T-cell (primary cell): ENCODE measurements at regions of chr11 and their contacts with region 1.

Region 1: DNA sequence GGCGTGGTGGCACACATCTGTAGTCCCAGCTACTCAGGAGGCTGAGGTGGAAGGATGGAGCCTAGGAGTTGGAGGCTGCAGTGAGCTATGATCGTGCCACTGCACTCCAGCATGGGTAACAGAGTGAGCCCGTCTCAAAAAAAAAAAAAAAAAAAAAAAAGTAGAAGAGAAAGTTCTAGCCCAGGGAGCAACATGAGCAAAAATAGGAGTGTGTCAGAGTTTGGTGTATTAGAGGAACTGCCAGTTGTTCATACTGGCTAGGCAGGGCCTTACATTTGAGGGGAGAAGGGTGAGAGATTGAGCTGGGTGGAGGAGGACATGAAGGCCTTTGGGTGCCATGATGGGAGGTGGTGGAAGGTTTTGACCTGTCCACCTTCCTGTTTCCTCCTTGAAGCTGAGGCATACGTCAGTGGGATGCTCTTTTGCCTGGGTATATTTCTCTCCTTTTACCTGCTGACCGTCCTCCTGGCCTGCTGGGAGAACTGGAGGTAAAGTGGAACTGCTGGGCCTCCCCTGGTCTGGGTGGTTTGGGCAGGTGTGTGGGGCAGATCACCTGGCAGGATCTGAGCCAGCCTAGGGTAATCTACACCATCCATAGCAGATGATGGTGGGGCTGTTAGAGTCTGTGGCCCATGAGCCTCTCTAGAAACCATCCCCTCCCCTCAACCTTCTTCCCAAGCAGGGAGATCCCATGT is 7.3 kb downstream of the SIDT2 start:
- DNase-seq: no peak
- ATAC-seq: no peak
- H3K4me3 ChIP-seq: no peak overlapping the region
- H3K4me3 Mint-ChIP-seq: no peak overlapping the region
- H3K27ac ChIP-seq: no peak overlapping the region
- H3K27ac Mint-ChIP-seq: no peak overlapping the region
- H3K4me1 ChIP-seq: peaks cover 1 to 13% of the 10 kb centered on the region in 2 experiments
- H3K4me1 Mint-ChIP-seq: peaks cover 3 to 11% (median 5%) of the 10 kb centered on the region in 3 donors
- H3K27me3 ChIP-seq: no peaks in the 10 kb centered on the region
- H3K27me3 Mint-ChIP-seq: no peaks in the 10 kb centered on the region

Region 2: GRCh38 chr11:117166491-117166890 is 19.4 kb before region 1 on chr11:
- CTCF ChIA-PET with region 1: interaction called in 1 of 2 experiments, 5 read pairs
- POLR2A ChIA-PET with region 1: interaction called in 1 of 2 experiments, 11 read pairs
- DNase-seq: no peak
- ATAC-seq: no peak
- H3K4me3 ChIP-seq: no peak overlapping the region
- H3K4me3 Mint-ChIP-seq: no peak overlapping the region
- H3K27ac ChIP-seq: no peak overlapping the region
- H3K27ac Mint-ChIP-seq: no peak overlapping the region
- H3K4me1 ChIP-seq: no peaks in the 10 kb centered on the region
- H3K4me1 Mint-ChIP-seq: peaks cover 0 to 16% (median 0%) of the 10 kb centered on the region in 3 donors
- H3K27me3 ChIP-seq: no peaks in the 10 kb centered on the region
- H3K27me3 Mint-ChIP-seq: no peaks in the 10 kb centered on the region

Region 3: DNA sequence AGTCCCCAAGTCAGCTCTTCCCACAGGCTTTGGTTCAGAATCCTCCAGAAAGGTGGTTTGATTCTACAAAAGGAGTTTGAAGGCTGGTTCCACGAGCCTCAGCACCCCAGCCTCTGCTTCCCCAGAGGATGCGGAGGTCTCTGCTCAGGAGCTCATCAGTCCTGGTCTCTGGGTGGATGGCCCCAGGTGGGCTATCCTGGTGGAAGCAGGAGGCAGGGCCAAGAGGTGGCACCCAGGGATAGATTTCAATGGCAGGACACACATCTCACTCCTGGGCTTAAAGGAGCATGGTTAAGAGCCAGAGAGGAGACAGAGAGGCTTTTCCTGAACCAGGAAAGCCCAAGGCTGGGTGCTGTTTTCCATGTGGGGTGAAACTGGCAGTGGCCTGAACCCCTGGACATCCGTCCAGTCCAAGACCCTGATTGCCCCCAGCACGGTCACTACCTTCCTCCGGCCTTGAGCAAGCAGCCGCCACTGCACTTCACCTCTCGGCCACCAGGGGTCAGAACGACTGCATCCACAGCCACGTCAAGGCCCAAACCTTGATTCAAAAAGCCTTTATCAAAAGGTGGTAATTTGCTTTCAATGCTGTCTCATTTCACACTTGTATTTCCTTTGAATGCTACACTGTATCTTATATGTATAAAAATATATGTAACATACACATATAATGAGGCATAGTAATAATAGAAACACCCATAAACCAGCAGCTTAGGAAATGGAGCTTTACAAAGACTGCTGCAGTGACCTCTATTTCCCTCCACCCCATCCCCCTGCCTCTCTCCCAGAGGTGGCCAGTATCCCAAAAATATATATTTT is 658.0 kb after region 1 on chr11:
- CTCF ChIA-PET with region 1: no interaction called
- POLR2A ChIA-PET with region 1: no interaction called
- DNase-seq: peak; percentile 37 to 90 (median 75)
- ATAC-seq: peak; percentile 78 to 83 (median 82)
- H3K4me3 ChIP-seq: no peak overlapping the region
- H3K4me3 Mint-ChIP-seq: no peak overlapping the region
- H3K27ac ChIP-seq: no peak overlapping the region
- H3K27ac Mint-ChIP-seq: no peak overlapping the region
- H3K4me1 ChIP-seq: peaks cover 0 to 8% of the 10 kb centered on the region in 2 experiments
- H3K4me1 Mint-ChIP-seq: peaks cover 0 to 6% (median 0%) of the 10 kb centered on the region in 3 donors
- H3K27me3 ChIP-seq: peaks cover 0 to 6% of the 10 kb centered on the region in 2 experiments
- H3K27me3 Mint-ChIP-seq: peaks cover 0 to 2% of the 10 kb centered on the region in 2 donors